Calu3 (cell line): ENCODE measurements at regions of chr2 and their contacts with region 1.

Region 1: DNA sequence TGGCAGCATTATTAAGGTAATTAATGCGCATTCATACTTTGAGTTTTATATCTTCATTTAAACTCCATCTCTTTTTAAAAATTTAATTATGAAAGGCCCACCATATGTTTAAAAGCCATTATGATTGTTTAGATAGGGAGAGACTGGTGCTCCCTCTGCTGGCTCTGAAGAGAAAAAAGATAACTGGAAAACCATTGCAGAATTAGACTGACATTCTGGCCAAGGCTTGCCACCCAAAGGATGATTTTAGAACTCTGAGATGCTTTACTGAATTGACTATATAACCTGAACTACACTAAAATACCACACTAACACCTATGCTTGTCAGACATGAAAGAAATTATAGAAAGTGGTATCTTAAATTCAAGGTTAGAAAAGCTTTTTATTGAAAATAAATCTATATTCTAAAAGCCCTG is 127.6 kb upstream of the SPOPL start:
- DNase-seq: peak; percentile 28
- H3K4me3 Mint-ChIP-seq: no peak overlapping the region
- H3K27ac Mint-ChIP-seq: no peak overlapping the region
- H3K4me1 Mint-ChIP-seq: no peaks in the 10 kb centered on the region
- H3K27me3 Mint-ChIP-seq: no peaks in the 10 kb centered on the region
- CTCF ChIP-seq: peak; percentile 43

Region 2: GRCh38 chr2:137910641-137911040 is 463.4 kb before region 1 on chr2:
- CTCF ChIA-PET with region 1: no interaction called
- intact Hi-C with region 1: loop called (anchors 2 kb)
- DNase-seq: no peak
- H3K4me3 Mint-ChIP-seq: no peak overlapping the region
- H3K27ac Mint-ChIP-seq: no peak overlapping the region
- H3K4me1 Mint-ChIP-seq: peaks cover 17% of the 10 kb centered on the region
- H3K27me3 Mint-ChIP-seq: no peaks in the 10 kb centered on the region
- CTCF ChIP-seq: peak; percentile 53

Region 3: GRCh38 chr2:138090330-138090729 is 283.7 kb before region 1 on chr2:
- CTCF ChIA-PET with region 1: no interaction called
- intact Hi-C with region 1: loop called (anchors 5 kb)
- DNase-seq: peak; percentile 50
- H3K4me3 Mint-ChIP-seq: no peak overlapping the region
- H3K27ac Mint-ChIP-seq: no peak overlapping the region
- H3K4me1 Mint-ChIP-seq: peaks cover 6% of the 10 kb centered on the region
- H3K27me3 Mint-ChIP-seq: no peaks in the 10 kb centered on the region
- CTCF ChIP-seq: peak; percentile 36

Region 4: DNA sequence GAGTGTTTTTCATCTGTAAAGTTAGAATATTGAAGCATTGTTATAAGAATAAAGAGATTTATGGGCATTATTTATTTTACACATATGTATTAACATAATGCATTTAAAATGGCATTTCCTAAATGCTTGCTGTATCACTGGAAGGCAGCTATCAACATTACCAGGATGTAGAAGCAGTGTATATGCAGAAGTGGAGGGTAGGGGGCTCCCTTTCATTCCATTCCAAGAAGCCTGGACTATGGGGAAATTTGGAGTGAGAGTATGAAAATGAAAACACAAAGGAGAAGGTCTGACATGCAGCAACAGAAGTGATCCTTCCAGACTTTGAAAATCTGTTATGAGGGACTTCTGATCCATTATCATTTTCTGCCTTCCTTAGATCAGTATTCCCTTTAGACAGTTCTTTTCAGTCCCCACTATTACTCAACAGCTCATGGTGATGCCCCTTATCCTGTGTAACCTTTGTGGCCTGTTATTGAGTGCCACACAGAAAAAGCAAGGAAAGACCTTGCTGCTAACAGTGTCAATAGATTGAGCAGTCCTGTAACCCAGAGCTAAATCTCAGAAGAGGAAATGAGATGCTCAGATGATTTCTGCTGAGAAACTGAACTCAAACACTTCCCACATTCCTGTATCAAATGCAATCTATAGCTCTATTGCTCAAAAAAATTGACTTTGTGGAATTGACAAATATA is 193.2 kb before region 1 on chr2:
- CTCF ChIA-PET with region 1: no interaction called
- intact Hi-C with region 1: loop called (anchors 1 kb)
- DNase-seq: peak; percentile 7
- H3K4me3 Mint-ChIP-seq: no peak overlapping the region
- H3K27ac Mint-ChIP-seq: no peak overlapping the region
- H3K4me1 Mint-ChIP-seq: peaks cover 24% of the 10 kb centered on the region
- H3K27me3 Mint-ChIP-seq: no peaks in the 10 kb centered on the region
- CTCF ChIP-seq: no peak

Region 5: DNA sequence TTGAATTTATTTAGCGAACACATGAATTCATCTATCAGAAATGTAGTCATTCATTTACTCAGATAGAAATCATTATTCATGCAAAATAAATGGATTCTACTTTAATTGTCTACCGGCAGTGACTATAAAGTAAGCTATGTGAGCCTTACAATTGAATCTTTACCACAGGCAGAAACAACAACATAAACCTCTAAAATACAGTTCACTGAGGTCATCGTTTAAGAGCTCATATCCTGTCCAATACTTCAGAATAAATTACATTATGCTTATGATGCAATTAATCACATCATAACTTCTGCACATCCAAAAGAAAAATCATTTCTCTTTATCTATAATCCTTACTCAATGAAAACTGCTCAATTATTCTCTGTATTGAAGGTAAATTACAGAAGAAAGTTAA is 165.0 kb before region 1 on chr2:
- CTCF ChIA-PET with region 1: no interaction called
- intact Hi-C with region 1: no loop called
- DNase-seq: no peak
- H3K4me3 Mint-ChIP-seq: no peak overlapping the region
- H3K27ac Mint-ChIP-seq: no peak overlapping the region
- H3K4me1 Mint-ChIP-seq: no peaks in the 10 kb centered on the region
- H3K27me3 Mint-ChIP-seq: no peaks in the 10 kb centered on the region
- CTCF ChIP-seq: no peak

Region 6: DNA sequence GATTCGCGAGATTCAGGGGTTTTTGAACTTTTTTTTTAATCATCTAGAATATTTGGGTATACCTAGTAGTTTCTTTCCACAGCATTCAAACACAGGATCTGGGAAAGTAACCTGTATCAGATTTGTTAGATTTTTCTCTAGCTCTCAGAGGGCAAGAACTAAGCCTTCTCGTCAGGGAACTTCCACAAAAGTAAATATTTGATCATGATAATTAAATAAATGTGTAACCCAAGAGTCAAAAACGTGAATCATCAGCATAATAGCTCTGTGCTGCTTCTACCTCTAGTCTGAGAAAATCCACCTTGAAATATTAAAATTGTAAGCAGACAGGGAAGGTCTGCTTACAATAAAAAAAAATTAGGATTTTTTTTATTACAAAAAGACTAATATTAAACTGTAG is 98.1 kb before region 1 on chr2:
- CTCF ChIA-PET with region 1: no interaction called
- intact Hi-C with region 1: loop called (anchors 5 kb)
- DNase-seq: no peak
- H3K4me3 Mint-ChIP-seq: peak overlapping the region; percentile 33
- H3K27ac Mint-ChIP-seq: peak overlapping the region; percentile 63
- H3K4me1 Mint-ChIP-seq: peaks cover 41% of the 10 kb centered on the region
- H3K27me3 Mint-ChIP-seq: no peaks in the 10 kb centered on the region
- CTCF ChIP-seq: no peak